ENCODE measurements at regions of chr1 and their contacts with region 1.

Region 1: GRCh38 chr1:44631647-44632539 is 42.4 kb downstream of the TMEM53 start:
- DNase-seq: peak; percentile 94
- H3K4me3 Mint-ChIP-seq: peak overlapping the region; percentile 91
- H3K27ac Mint-ChIP-seq: peak overlapping the region; percentile 94
- H3K4me1 Mint-ChIP-seq: peaks cover 36% of the 10 kb centered on the region
- H3K27me3 Mint-ChIP-seq: no peaks in the 10 kb centered on the region

Region 2: GRCh38 chr1:44643721-44644334 is 11.9 kb after region 1 on chr1:
- CTCF ChIA-PET with region 1: interaction called, 4 read pairs
- POLR2A ChIA-PET with region 1: interaction called, 17 read pairs
- intact Hi-C with region 1: no loop called
- DNase-seq: no peak
- H3K4me3 Mint-ChIP-seq: no peak overlapping the region
- H3K27ac Mint-ChIP-seq: no peak overlapping the region
- H3K4me1 Mint-ChIP-seq: no peaks in the 10 kb centered on the region
- H3K27me3 Mint-ChIP-seq: no peaks in the 10 kb centered on the region

Region 3: GRCh38 chr1:44664730-44665370 is 33.0 kb after region 1 on chr1:
- CTCF ChIA-PET with region 1: interaction called, 3 read pairs
- POLR2A ChIA-PET with region 1: interaction called, 10 read pairs
- intact Hi-C with region 1: no loop called
- DNase-seq: peak; percentile 68
- H3K4me3 Mint-ChIP-seq: peak overlapping the region; percentile 14
- H3K27ac Mint-ChIP-seq: peak overlapping the region; percentile 43
- H3K4me1 Mint-ChIP-seq: peaks cover 17% of the 10 kb centered on the region
- H3K27me3 Mint-ChIP-seq: no peaks in the 10 kb centered on the region

Region 4: DNA sequence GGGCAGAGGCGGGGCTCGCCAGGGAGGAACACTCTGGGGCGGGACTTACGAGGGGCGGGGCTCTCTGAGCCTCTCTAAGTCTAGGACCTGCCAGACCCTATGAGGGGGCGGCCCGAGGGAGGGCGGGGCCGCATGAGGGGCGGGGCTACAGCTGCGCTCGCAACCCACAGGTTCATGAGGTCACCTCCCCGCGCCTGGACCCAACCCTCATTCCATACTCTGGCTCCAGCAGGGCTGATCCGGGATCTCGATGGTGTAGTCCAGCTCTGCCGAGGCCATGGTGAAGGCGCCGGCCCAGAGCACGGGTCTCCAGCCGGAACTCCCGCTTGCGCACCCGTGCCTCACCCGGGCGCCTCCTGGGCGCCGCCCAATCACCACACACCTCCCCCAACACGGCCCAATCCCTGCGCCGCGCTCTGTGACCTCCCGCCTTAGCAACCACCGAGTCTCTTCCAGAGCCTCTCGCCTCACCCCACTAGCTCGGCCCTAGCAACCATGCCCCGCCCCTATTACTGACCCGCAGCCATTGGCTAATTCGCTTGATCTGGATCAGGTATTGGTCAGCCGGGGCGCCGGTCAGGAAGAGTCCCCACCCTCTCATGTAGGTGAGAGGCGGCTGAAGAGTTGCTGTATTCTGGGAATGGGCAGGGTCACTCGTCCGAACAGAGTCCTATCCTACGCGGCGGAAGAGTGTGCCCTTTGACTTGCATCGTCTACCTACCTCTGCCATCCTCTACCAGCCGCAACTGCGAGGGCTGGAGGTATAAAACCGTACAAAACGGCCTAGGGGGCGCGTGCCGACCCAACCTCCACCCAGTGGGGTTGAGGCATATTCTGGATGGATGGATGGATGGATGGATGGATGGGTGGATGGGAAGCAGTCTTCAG is 42.5 kb after region 1 on chr1 and contains the starts of genes ARMH1 and TMEM53:
- CTCF ChIA-PET with region 1: interaction called, 3 read pairs
- POLR2A ChIA-PET with region 1: interaction called, 36 read pairs
- intact Hi-C with region 1: loop called (anchors 1 kb)
- DNase-seq: peak; percentile 99
- H3K4me3 Mint-ChIP-seq: peak within 1 kb of the TSS; percentile 83
- H3K27ac Mint-ChIP-seq: peak within 1 kb of the TSS; percentile 88
- H3K4me1 Mint-ChIP-seq: peaks cover 23% of the 10 kb centered on the region
- H3K27me3 Mint-ChIP-seq: no peaks in the 10 kb centered on the region
- total RNA-seq, gene ARMH1: 134 to 141 TPM
- total RNA-seq, gene TMEM53: 5.1 to 6.5 TPM

Region 5: GRCh38 chr1:44799770-44800584 is 168.1 kb after region 1 on chr1 and contains the start of gene PLK3:
- CTCF ChIA-PET with region 1: no interaction called
- POLR2A ChIA-PET with region 1: no interaction called
- intact Hi-C with region 1: loop called (anchors 10 kb)
- DNase-seq: peak; percentile 99
- H3K4me3 Mint-ChIP-seq: peak within 1 kb of the TSS; percentile 93
- H3K27ac Mint-ChIP-seq: peak within 1 kb of the TSS; percentile 95
- H3K4me1 Mint-ChIP-seq: peaks cover 34% of the 10 kb centered on the region
- H3K27me3 Mint-ChIP-seq: no peaks in the 10 kb centered on the region
- total RNA-seq, gene PLK3: 80.2 to 87.9 TPM